ENCODE measurements at regions of chr1 and their contacts with region 1.

Region 1: GRCh38 chr1:197868751-197869489 is 33.5 kb upstream of the C1orf53 start:
- DNase-seq: peak; percentile 86
- H3K4me3 Mint-ChIP-seq: no peak overlapping the region
- H3K27ac Mint-ChIP-seq: no peak overlapping the region
- H3K4me1 Mint-ChIP-seq: no peaks in the 10 kb centered on the region
- H3K27me3 Mint-ChIP-seq: no peaks in the 10 kb centered on the region
- CTCF ChIP-seq: peak; percentile 88

Region 2: DNA sequence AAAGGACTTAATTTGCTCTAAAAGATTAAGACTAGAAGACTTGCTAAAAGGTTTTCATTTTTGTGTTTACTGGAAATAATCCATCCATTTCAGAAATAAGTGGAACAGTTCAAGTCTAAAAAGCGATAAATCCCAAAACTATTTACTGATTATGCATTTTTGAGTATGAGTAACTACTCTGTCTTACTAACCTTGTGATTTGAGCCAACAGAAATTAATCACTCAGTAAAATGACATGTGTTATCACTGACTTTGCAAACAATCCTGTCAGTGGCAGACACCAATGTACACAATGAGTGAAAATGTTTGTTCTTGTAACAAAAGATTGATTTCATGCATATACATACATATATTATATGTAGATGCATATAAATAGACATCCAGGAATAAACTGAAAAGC is 311.6 kb before region 1 on chr1:
- CTCF ChIA-PET with region 1: interaction called, 14 read pairs
- POLR2A ChIA-PET with region 1: no interaction called
- intact Hi-C with region 1: no loop called
- DNase-seq: peak; percentile 29
- H3K4me3 Mint-ChIP-seq: no peak overlapping the region
- H3K27ac Mint-ChIP-seq: no peak overlapping the region
- H3K4me1 Mint-ChIP-seq: peaks cover 4% of the 10 kb centered on the region
- H3K27me3 Mint-ChIP-seq: no peaks in the 10 kb centered on the region
- CTCF ChIP-seq: no peak

Region 3: GRCh38 chr1:197692965-197693364 is 176.0 kb before region 1 on chr1:
- CTCF ChIA-PET with region 1: interaction called, 49 read pairs
- POLR2A ChIA-PET with region 1: interaction called, 3 read pairs
- intact Hi-C with region 1: loop called (anchors 1 kb)
- DNase-seq: peak; percentile 46
- H3K4me3 Mint-ChIP-seq: no peak overlapping the region
- H3K27ac Mint-ChIP-seq: no peak overlapping the region
- H3K4me1 Mint-ChIP-seq: peaks cover 19% of the 10 kb centered on the region
- H3K27me3 Mint-ChIP-seq: no peaks in the 10 kb centered on the region
- CTCF ChIP-seq: peak; percentile 61

Region 4: DNA sequence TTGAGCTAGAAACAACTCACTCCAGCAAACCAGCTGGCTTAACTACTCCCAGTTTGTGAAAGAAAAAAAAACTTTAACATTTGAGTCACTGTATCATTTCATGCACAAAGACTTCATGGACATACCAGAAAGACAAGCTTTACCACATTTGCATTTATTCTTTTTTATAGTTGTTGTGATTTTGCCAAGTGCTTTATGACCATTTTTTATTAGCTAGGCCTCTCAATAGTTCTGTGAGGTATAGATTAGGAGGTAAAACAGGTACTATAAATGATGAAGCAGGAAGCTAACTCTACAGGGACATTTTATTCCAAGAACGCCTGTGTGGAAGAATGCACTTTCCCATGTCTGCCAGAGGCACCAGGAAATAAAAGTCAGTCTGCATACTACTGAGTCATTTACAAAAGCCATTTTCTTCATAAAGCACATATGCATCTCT is 85.4 kb before region 1 on chr1:
- CTCF ChIA-PET with region 1: interaction called, 10 read pairs
- POLR2A ChIA-PET with region 1: no interaction called
- intact Hi-C with region 1: no loop called
- DNase-seq: no peak
- H3K4me3 Mint-ChIP-seq: no peak overlapping the region
- H3K27ac Mint-ChIP-seq: peak overlapping the region; percentile 52
- H3K4me1 Mint-ChIP-seq: peaks cover 43% of the 10 kb centered on the region
- H3K27me3 Mint-ChIP-seq: no peaks in the 10 kb centered on the region
- CTCF ChIP-seq: no peak

Region 5: DNA sequence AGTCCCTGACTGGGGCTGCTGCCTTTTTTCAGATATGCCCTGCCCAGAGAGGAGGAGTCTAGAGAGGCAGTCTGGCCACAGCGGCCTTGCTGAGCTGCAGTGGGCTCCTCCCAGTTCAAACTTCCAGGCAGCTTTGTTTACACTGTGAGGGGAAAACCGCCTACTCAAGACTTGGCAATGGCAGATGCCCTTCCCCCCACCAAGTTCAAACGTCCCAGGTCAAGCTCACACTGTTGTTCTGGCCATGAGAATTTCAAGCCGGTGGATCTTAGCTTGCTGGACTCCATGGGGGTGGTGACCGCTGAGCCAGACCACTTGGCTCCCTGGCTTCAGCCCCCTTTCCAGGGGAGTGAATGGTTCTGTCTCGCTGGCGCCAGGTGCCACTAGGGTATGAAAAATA is 15.3 kb after region 1 on chr1:
- CTCF ChIA-PET with region 1: interaction called, 23 read pairs
- POLR2A ChIA-PET with region 1: interaction called, 3 read pairs
- intact Hi-C with region 1: no loop called
- DNase-seq: no peak
- H3K4me3 Mint-ChIP-seq: no peak overlapping the region
- H3K27ac Mint-ChIP-seq: no peak overlapping the region
- H3K4me1 Mint-ChIP-seq: no peaks in the 10 kb centered on the region
- H3K27me3 Mint-ChIP-seq: no peaks in the 10 kb centered on the region
- CTCF ChIP-seq: no peak

Region 6: GRCh38 chr1:197915862-197916499 is 47.1 kb after region 1 on chr1:
- CTCF ChIA-PET with region 1: interaction called, 10 read pairs
- POLR2A ChIA-PET with region 1: interaction called, 4 read pairs
- intact Hi-C with region 1: no loop called
- DNase-seq: peak; percentile 66
- H3K4me3 Mint-ChIP-seq: peak overlapping the region; percentile 59
- H3K27ac Mint-ChIP-seq: no peak overlapping the region
- H3K4me1 Mint-ChIP-seq: peaks cover 19% of the 10 kb centered on the region
- H3K27me3 Mint-ChIP-seq: no peaks in the 10 kb centered on the region
- CTCF ChIP-seq: peak; percentile 61

Region 7: DNA sequence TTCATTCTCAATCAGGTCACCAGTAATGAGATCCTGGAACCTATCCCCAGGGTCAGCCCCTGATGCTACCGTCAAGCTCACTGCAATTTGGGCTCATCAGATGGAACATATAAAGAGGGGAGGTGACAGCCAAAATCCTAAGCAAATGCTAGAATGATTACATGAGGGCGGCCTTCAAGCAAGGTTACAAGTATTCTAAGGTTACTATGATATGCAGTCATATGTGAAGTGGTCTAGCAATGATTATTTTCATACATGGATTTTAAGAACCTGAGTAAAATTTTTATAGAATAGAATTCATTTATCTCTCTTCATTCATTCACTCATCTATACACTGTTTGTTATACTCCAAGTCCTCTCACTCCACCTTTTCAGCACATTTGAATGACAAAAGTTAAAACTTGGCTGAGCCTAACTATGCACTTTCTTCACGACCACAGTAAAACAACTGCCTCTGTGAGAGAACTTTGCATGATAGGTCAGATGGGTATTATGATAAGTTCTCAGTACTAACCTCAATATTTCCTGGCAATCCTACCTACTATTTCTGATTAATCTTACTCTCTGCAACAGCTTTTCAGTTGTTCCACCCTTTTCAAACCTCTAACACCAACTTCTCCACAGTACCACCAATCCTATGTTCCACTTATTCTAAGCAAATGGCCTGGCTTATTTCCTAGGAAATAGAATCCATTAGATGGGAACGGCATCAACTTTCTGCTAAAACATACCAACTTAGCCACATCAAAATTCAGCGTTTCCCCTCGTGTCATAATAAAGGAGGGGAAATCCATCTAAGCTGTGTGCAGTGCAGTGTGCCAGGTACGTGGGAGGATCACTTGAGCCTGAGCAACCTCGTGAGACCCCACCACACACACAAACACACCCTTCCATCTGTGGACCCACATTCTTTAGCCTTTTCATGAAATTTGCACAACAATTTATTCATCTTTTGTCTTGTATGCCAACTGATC is 80.3 kb after region 1 on chr1:
- CTCF ChIA-PET with region 1: no interaction called
- POLR2A ChIA-PET with region 1: no interaction called
- intact Hi-C with region 1: no loop called
- DNase-seq: no peak
- H3K4me3 Mint-ChIP-seq: no peak overlapping the region
- H3K27ac Mint-ChIP-seq: no peak overlapping the region
- H3K4me1 Mint-ChIP-seq: no peaks in the 10 kb centered on the region
- H3K27me3 Mint-ChIP-seq: no peaks in the 10 kb centered on the region
- CTCF ChIP-seq: no peak

Region 8: DNA sequence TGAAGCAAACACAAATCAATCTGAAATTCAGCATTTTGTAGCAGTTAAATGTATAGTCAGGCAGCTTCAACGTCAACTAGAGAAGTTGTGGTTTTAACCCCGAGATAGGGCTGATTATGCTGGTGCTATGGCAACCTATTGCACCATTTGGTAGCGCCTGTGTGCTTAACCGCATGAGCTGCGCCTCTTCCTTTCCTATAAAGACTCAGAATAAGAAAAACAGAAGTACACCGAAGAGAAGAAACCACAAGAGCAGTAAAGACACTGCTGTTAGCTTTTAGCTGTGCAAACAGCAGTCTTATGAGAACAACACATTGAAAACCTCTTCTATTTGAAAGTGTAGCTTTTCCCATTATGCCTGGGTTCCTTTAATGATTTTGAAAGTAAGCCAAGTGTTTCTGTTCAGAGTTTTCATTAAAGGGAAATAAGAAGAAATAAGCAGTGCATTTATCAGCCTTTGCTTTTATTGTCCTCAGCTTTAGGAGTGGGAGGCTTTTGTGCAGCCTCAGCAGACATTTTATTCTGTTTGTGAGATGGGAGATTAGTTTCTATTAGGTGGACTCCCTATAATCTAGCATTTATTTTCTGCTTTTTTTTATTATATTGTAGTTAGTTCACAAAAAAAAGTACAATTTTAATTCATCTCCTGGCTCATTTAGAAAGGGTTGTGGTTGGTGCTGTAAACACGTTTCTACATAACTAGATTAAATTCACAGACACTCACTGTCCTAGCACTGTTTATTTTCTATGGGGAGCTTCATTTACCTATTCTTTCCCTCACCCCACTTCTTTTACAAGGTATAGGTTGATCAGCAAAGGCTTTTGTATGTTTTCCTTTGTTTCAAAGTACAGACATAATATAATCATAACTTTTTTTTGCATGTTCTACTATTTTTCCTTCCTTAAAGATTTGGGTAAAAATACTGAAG is 813.2 kb after region 1 on chr1:
- CTCF ChIA-PET with region 1: interaction called, 4 read pairs
- POLR2A ChIA-PET with region 1: no interaction called
- intact Hi-C with region 1: loop called (anchors 2 kb)
- DNase-seq: peak; percentile 94
- H3K4me3 Mint-ChIP-seq: peak overlapping the region; percentile 67
- H3K27ac Mint-ChIP-seq: peak overlapping the region; percentile 96
- H3K4me1 Mint-ChIP-seq: peaks cover 25% of the 10 kb centered on the region
- H3K27me3 Mint-ChIP-seq: no peaks in the 10 kb centered on the region
- CTCF ChIP-seq: no peak

Measured in MCF 10A (cell line).